ENCODE measurements at regions of chr1 and their contacts with region 1.

Region 1: DNA sequence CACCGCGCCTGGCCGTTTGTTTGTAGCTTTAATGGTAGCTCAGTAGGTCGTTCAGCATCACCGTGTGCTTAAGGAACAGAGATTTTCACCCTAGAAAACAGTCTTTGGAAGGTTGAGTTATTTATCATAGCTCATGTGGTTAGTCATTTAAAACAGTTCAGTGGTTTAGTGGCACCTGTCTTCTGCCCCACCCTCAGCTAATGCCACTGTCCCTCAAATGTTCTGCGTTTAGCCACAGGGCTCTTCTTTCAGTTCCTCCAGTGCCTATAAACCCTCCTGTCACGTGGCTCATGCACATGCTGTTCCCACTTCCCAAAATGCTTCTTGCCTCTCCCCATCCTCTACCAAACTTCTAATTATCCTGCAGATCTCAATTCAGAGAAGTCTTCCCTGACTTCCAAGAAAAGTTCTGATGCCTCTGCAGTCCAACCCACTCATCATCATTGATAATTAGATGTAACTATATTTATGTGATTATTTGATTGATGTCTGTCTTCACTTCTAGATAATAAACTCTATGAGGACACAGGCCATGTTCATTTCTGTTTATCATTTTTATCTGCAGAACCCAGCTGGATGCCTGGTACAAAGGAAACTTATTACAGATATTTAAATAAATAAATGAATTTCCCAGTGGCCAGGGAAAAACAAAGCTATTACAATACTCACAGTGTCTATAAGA is 14.4 kb upstream of the DIPK1A start:
- DNase-seq: no peak
- H3K4me3 Mint-ChIP-seq: no peak overlapping the region
- H3K27ac Mint-ChIP-seq: no peak overlapping the region
- H3K4me1 Mint-ChIP-seq: no peaks in the 10 kb centered on the region
- H3K27me3 Mint-ChIP-seq: no peaks in the 10 kb centered on the region
- CTCF ChIP-seq: no peak

Region 2: DNA sequence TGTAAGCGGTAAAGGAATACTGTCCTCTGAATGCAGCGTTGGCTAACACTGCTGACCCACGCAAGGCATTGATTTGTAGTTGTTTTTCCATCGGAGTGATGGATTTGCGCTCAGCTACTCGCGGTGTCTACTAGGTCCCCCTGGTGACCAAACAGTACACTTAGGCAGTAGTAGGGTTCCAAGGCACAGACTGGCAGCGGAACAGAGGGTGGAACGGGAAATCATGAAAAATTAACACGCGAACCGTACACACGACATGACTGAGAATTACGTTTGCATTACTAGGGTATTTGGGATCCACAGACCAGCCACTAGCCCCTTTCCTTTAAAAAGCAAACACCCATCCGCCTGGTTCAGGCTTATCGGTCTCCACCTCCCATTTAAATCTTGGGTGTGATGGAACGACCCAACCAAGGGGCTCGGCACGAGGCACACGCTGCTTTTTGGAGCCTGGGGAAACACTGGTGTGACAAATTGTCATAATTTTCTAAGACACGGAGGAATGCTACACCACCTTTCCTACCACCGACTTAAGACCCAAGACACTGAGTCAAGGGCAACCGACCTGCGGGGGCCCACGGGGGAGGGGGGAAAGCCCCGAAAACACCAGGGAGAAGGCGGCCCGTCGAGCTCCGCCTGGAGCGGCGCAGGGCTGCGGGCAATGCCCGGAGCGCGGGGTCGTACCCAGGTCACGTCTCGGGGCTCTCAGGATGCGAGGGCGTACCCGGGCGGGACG is 15.1 kb before region 1 on chr1:
- CTCF ChIA-PET with region 1: interaction called, 20 read pairs
- POLR2A ChIA-PET with region 1: interaction called, 14 read pairs
- intact Hi-C with region 1: no loop called
- DNase-seq: peak; percentile 82
- H3K4me3 Mint-ChIP-seq: peak overlapping the region; percentile 85
- H3K27ac Mint-ChIP-seq: peak overlapping the region; percentile 78
- H3K4me1 Mint-ChIP-seq: peaks cover 4% of the 10 kb centered on the region
- H3K27me3 Mint-ChIP-seq: no peaks in the 10 kb centered on the region
- CTCF ChIP-seq: peak; percentile 35

Measured in MCF 10A (cell line).